Activated B cell treated with CpG ODN at 0.5 μM for 24 hours (primary cell): ENCODE measurements at regions of chr1 and their contacts with region 1.

Region 1: DNA sequence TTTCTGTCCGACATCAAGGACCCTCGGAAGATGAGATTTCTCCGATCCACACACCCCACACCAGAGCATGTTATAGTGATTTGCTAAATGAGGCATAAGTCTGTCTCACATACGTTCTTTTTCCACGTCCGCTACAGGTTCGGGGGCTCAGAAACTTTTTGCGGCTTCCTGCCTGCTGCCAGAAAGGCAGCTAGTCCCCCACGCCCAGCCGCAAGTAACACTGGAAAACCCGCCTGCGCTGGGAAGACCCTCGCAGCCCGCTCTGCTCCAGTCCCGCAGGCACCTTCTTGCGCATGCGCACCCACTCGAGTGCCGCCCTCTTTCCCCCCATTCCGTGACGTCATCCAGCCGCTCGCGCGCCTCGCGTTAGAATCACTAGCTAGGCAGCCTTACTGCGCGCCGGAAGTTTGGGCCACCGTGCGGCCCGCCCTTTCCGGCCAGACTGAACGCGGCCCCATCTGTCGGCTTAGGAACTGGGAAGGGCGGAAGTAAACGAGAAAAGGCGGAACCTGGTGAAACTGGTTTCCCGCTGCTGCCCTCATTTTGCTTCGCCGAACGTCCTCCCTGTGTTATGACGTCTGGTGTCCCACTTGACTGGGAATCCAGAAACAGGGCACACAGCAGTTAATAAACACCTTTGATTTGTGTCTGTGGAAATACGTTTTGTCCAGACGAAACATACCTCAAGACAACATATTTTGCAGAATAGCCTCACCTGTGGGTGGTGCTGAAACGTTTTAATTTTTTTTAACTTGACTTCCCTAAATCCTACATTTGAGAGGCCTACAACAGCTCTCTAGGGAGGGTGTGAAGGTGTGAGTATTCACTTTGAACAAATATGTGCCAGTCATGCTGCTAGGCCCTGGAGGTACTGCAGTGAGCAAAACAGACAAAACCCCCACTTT is at the start of gene C1orf74:
- DNase-seq: peak; percentile 99
- ATAC-seq: peak; percentile 98
- H3K4me3 Mint-ChIP-seq: peak within 1 kb of the TSS; percentile 99
- H3K27ac Mint-ChIP-seq: peak within 1 kb of the TSS; percentile 98
- H3K4me1 Mint-ChIP-seq: peaks cover 20% of the 10 kb centered on the region
- H3K27me3 Mint-ChIP-seq: peaks cover 10% of the 10 kb centered on the region
- CTCF ChIP-seq: no peak
- total RNA-seq, gene C1orf74: 3.7 TPM in 2 replicates

Region 2: DNA sequence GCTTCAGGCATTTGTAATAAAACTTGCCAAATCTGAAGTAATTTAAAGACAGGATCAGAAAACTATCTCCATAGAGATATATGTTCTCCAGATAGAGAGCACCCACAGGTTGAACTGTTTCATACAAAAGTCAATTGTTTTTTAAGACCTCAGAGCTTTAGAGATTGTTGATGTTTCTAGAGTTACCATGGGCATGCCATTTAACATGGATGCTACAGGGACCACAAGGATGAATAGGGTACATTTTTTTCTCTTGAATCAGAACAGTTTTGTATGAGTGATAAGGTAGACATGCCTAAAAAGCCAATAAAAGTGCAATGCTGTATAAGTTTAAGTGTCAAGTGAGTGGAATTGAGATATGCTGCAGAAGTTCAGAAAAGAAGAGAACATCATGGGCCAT is 712.0 kb before region 1 on chr1:
- CTCF ChIA-PET with region 1: no interaction called
- POLR2A ChIA-PET with region 1: no interaction called
- intact Hi-C with region 1: no loop called
- DNase-seq: no peak
- ATAC-seq: no peak
- H3K4me3 Mint-ChIP-seq: no peak overlapping the region
- H3K27ac Mint-ChIP-seq: no peak overlapping the region
- H3K4me1 Mint-ChIP-seq: no peaks in the 10 kb centered on the region
- H3K27me3 Mint-ChIP-seq: no peaks in the 10 kb centered on the region
- CTCF ChIP-seq: no peak

Region 3: DNA sequence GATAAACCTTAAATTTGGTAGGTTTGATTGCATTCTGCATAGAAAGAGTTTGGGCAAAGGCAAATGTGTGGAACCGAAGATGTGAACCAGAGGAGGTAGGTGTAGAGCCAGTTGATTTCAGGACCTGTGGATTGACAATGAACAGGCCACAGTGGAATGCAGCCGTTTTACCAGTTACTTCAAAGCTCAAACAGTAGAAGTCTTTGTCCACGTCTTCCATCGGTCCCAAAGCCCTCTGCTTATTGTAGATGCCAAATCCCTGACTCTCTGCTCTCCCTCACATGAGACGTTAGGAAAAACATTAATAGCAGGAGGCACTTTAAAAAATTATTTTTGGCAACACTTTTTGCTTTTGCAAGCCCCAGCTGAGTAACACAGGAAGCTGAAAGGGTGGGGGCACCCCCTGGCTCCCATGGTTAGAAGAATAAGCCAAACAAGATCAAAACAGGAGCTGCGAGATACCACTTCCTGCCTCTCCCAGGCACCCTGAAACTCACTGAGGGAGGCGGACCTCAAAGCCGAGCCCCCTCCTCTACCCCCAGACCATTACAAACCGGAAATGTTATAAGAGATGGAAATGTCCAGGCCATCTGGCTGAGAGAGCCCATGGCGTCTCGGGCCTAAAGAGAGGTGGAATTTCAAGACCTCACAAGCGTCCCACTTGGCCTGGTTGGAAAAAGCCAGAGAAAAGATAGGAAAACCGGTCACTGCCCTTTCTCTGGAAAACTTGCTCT is 15.2 kb before region 1 on chr1:
- CTCF ChIA-PET with region 1: interaction called, 4 read pairs
- POLR2A ChIA-PET with region 1: interaction called, 50 read pairs
- intact Hi-C with region 1: loop called (anchors 1 kb)
- DNase-seq: no peak
- ATAC-seq: peak; percentile 43
- H3K4me3 Mint-ChIP-seq: no peak overlapping the region
- H3K27ac Mint-ChIP-seq: no peak overlapping the region
- H3K4me1 Mint-ChIP-seq: peaks cover 16% of the 10 kb centered on the region
- H3K27me3 Mint-ChIP-seq: no peaks in the 10 kb centered on the region
- CTCF ChIP-seq: no peak

Region 4: GRCh38 chr1:209805875-209806760 is 21.6 kb after region 1 on chr1 and contains the start of gene IRF6:
- CTCF ChIA-PET with region 1: no interaction called
- POLR2A ChIA-PET with region 1: no interaction called
- intact Hi-C with region 1: loop called (anchors 1 kb)
- DNase-seq: peak; percentile 69
- ATAC-seq: peak; percentile 94
- H3K4me3 Mint-ChIP-seq: peak within 1 kb of the TSS; percentile 96
- H3K27ac Mint-ChIP-seq: peak within 1 kb of the TSS; percentile 81
- H3K4me1 Mint-ChIP-seq: peaks cover 7% of the 10 kb centered on the region
- H3K27me3 Mint-ChIP-seq: peaks cover 21% of the 10 kb centered on the region
- CTCF ChIP-seq: no peak
- total RNA-seq, gene IRF6: 0.42 and 0.81 TPM in 2 replicates

Region 5: DNA sequence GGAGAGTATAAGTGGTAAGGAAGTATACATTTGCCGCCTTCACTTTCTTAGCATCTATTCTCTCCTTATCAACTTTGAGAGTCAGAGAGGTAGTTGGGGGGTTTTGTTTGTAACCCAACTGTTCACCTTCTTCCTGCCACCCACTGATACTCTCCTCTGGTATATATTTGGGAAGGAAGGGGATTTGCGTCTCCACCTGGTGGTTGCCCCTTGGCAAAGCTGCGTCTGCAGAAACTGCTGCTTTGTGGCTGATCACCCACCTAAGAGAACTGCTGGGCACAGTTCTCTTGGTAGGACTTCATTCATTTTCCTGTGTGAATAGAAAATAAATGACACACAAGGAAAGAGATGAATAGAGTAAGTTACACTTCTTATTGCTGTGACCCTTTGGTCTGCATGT is 240.5 kb after region 1 on chr1:
- CTCF ChIA-PET with region 1: no interaction called
- POLR2A ChIA-PET with region 1: no interaction called
- intact Hi-C with region 1: no loop called
- DNase-seq: no peak
- ATAC-seq: no peak
- H3K4me3 Mint-ChIP-seq: no peak overlapping the region
- H3K27ac Mint-ChIP-seq: no peak overlapping the region
- H3K4me1 Mint-ChIP-seq: no peaks in the 10 kb centered on the region
- H3K27me3 Mint-ChIP-seq: no peaks in the 10 kb centered on the region
- CTCF ChIP-seq: no peak